Right ventricle myocardium inferior (tissue), 1 donor: ENCODE measurements at regions of chr19 and their contacts with region 1.

Region 1: GRCh38 chr19:17336872-17337722 is at the start of gene GTPBP3:
- DNase-seq: peak; percentile 99
- ATAC-seq: peak; percentile 93
- total RNA-seq, gene GTPBP3: 11.5 TPM

Region 2: DNA sequence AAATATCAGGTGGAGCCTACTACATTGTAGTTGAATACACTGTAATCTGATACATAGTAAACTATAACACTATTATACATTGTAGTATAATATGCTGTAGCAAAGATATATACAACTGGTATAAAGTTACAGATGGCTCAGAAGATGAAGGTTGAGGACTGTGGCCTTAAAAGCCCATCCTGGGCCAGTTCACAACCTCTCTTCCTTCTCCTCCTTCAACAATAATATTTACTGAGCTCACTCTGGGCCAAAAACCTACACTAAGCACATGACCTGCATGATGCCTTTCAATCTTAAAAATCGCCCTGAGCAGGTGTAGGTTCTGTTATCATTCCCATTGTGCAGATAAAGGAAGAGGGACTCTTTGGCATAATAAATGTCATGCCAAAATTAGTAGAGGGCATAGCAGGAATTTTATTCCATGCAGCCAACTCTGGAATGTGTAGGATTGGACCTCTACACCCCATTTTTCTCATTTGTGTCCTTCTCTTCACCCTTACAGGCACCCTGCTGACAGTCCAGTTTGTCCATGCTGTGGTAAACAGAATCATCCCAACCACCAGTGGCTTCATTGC is 522.5 kb before region 1 on chr19:
- intact Hi-C with region 1: no loop called
- DNase-seq: no peak
- ATAC-seq: no peak

Region 3: GRCh38 chr19:17215125-17215971 is 121.7 kb before region 1 on chr19 and contains the start of gene USE1:
- intact Hi-C with region 1: loop called (anchors 1 kb)
- DNase-seq: peak; percentile 96
- ATAC-seq: peak; percentile 97
- total RNA-seq, gene USE1: 32.8 TPM

Region 4: DNA sequence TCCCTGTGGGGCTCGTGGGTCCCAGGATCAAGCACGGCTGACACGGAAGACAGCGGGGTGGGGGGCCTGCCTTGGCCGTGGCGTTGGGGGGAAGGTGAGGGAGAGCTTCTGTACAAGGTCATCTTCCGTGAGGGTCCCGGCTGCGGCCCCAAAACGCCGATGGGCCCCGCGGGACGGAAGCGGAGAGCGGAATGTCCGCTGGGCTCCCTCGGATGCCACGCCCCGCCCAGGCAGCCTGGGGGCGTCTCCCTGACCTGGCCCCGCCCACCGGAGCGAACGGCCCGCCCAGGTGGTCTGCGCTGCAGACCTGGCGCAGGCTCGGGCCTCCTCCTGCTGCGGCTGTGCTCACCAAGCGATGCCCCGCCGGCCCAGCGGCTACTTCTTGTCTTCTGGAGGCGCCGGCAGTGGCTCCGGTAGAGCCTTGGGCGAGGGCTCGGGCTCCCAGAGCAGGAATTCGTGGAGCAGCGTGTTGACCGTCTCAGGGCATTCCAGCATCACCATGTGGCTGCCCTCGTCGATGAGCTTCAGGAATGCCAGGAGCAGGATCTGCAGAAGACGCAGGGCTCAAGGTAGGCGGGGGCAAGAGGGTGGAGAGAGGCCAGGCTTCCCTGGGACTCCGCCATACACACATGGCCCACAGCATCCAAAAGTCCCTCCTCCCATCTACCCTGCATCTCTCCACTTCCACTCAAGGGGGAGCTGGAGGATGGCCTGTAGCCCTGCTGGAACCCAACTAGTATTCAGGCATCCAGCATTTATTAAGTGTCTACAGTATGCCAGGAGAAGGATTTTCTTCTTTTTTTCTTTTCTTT is 44.6 kb before region 1 on chr19:
- intact Hi-C with region 1: no loop called
- DNase-seq: peak; percentile 90
- ATAC-seq: peak; percentile 93

Region 5: DNA sequence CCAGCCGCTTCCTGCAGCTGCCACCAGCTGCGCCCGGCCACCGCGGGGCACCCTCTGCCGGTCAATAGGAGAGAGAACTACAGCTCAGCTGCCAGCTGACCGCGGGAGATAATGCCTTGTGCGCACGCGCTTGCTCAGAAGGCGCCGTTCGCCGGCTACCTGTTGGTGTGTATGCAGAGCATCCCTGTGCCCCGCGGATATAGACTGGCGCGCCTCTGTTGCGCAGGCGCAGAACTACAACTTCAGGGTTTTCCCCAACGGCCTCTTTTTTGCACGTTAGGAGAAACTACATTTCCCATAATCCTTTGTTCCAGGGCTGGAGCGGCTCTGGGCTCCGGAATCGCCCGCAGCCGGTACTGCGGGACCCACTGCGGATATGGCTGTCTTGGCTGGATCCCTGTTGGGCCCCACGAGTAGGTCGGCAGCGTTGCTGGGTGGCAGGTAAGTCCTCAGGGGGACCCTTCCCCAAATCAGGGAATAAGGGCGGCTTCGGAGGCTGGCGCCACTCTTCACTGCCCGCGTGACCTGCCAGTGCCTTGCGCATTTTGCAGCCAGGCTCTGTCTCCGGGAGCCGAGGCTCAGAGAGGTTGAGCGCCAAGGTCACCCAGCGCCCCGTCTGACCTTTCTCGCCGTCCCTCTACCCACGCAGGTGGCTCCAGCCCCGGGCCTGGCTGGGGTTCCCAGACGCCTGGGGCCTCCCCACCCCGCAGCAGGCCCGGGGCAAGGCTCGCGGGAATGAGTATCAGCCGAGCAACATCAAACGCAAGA is 31.4 kb before region 1 on chr19 and contains the start of gene MRPL34:
- intact Hi-C with region 1: loop called (anchors 2 kb)
- DNase-seq: peak; percentile 96
- ATAC-seq: peak; percentile 68
- total RNA-seq, gene MRPL34: 200 TPM

Region 6: DNA sequence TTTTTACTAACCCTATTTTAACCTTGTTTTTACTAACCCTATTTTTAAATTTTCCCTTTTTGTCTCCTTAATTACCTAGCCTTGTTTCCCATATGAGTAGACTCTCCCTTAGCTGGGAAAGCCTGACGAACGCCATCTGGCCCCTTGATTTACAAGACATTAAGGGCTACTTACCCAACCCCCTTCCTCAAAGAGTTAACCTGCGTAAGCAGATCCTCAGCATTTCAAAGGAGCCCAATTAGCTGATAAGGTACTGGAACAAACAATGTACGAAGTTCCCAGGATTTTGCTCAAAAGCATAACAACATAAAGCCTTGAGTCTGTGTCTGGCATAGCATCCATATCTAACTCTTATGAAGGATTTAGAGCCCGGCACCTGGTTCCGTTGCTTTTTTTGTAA is 78.0 kb after region 1 on chr19:
- intact Hi-C with region 1: no loop called
- DNase-seq: no peak
- ATAC-seq: no peak